ENCODE measurements at regions of chr9 and their contacts with region 1.

Region 1: DNA sequence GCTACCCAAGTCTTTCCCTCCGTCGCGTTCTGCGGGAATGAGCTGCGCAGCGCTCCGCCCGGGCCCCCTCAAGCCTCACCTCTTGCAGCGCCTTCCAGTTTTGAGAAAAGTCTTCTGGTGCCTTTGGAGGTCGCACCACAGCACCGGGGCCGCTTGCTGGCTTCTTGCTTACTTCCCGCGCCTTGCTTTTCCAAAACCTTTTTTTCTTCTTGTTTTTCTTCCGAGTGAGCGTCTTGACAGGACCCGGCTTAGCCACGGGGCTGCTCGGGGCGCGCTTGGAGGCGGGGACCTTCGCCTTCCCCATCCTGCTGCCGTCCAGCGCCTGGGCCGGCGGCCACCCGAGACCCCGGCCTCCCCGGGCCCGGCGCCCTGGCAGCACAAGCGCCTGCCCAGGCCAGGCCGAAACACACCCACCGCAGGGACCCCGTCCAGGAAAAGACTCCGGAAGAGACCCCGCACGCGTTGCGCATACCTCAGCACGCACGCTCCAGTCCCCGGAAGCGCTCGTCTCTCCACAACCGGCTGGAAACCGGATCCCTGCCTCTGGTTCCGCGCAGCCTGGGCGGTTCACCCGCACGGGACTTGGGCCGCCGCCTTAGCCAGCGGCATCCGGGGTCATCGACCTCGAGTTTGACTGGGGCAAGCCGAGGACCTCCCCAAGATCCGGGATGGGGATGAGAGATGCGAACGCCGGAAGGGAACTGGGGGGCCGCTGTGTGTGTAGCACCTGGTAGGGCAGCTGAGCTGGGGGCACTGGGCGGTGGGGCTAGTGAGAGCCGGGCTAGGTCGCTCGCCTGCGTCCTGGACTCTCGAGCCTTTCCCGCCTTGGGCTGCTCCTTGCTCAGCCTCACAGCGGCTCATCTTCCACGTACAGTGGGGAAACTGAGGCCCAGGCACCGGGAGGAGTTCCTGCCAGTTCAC is at the start of gene REXO4:
- DNase-seq: peak; percentile 92
- ATAC-seq: peak; percentile 87
- H3K4me3 Mint-ChIP-seq: peak within 1 kb of the TSS; percentile 92
- H3K27ac Mint-ChIP-seq: peak within 1 kb of the TSS; percentile 93
- H3K4me1 Mint-ChIP-seq: peaks cover 51% of the 10 kb centered on the region
- H3K27me3 Mint-ChIP-seq: no peaks in the 10 kb centered on the region
- total RNA-seq, gene REXO4: 25.9 to 34.3 TPM

Region 2: DNA sequence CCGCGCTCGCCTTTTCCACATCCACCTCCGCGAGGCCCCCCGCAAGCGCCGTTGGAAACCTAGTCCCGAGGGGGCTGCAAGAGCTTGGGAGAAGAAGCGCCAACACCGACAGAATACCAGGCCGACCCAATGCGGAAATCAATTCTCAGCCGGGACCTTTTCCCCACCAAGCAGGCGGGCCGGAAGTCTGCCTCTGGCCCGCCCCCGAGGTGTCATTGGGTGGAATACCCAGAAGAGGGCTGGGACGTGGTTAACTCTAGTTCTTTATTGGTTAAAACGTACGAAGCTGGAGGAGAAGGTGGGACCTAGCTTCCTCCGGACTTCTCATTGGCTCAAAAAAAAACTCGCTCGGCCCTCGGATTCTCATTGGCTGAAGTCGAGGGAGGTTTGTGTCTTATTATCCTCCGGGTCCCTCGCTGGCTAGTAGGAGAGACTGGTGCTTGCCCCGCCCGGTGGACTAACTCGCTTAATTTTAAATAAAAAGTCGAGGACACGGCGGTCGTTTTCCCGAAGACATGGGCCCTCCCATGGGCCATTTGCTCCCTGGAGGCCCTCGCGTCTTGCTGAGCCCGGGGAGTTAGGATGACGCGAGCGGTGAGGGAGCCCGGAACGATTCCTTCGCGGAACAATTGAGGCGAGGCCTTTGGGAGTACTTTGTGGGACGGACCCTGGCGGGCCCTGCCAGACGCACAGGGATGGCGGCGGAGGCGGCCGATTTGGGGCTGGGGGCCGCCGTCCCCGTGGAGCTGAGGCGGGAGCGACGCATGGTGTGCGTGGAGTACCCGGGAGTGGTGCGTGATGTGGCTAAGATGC is 387.3 kb before region 1 on chr9 and contains the start of gene GTF3C5:
- CTCF ChIA-PET with region 1: no interaction called
- POLR2A ChIA-PET with region 1: no interaction called
- intact Hi-C with region 1: loop called in 1 of 2 experiments (anchors 2 kb)
- DNase-seq: peak; percentile 95
- ATAC-seq: peak; percentile 98
- H3K4me3 Mint-ChIP-seq: peak within 1 kb of the TSS; percentile 94
- H3K27ac Mint-ChIP-seq: peak within 1 kb of the TSS; percentile 95
- H3K4me1 Mint-ChIP-seq: peaks cover 41% of the 10 kb centered on the region
- H3K27me3 Mint-ChIP-seq: no peaks in the 10 kb centered on the region
- total RNA-seq, gene GTF3C5: 81.3 to 84.5 TPM

Region 3: GRCh38 chr9:133347985-133348717 is 69.7 kb before region 1 on chr9 and contains the starts of genes MED22 and RPL7A:
- CTCF ChIA-PET with region 1: no interaction called
- POLR2A ChIA-PET with region 1: no interaction called
- intact Hi-C with region 1: loop called (anchors 1 to 5 kb)
- DNase-seq: peak; percentile 96
- ATAC-seq: peak; percentile 83
- H3K4me3 Mint-ChIP-seq: peak within 1 kb of the TSS; percentile 97
- H3K27ac Mint-ChIP-seq: peak within 1 kb of the TSS; percentile 97
- H3K4me1 Mint-ChIP-seq: peaks cover 36% of the 10 kb centered on the region
- H3K27me3 Mint-ChIP-seq: no peaks in the 10 kb centered on the region
- total RNA-seq, gene MED22: 22.9 to 26.4 TPM
- total RNA-seq, gene RPL7A: 3,179 to 3,246 TPM

Region 4: GRCh38 chr9:133406480-133407307 is 11.1 kb before region 1 on chr9:
- CTCF ChIA-PET with region 1: interaction called, 3 read pairs
- POLR2A ChIA-PET with region 1: no interaction called
- intact Hi-C with region 1: loop called (anchors 1 kb)
- DNase-seq: peak; percentile 93
- ATAC-seq: peak; percentile 94
- H3K4me3 Mint-ChIP-seq: no peak overlapping the region
- H3K27ac Mint-ChIP-seq: peak overlapping the region; percentile 48
- H3K4me1 Mint-ChIP-seq: peaks cover 6% of the 10 kb centered on the region
- H3K27me3 Mint-ChIP-seq: no peaks in the 10 kb centered on the region

Region 5: GRCh38 chr9:133478851-133479711 is 61.3 kb after region 1 on chr9 and contains the start of gene SLC2A6:
- CTCF ChIA-PET with region 1: interaction called, 3 read pairs
- POLR2A ChIA-PET with region 1: interaction called, 3 read pairs
- intact Hi-C with region 1: loop called in 1 of 2 experiments (anchors 1 kb)
- DNase-seq: peak; percentile 89
- ATAC-seq: peak; percentile 100
- H3K4me3 Mint-ChIP-seq: peak within 1 kb of the TSS; percentile 67
- H3K27ac Mint-ChIP-seq: no peak within 1 kb of the TSS
- H3K4me1 Mint-ChIP-seq: peaks cover 6% of the 10 kb centered on the region
- H3K27me3 Mint-ChIP-seq: no peaks in the 10 kb centered on the region
- total RNA-seq, gene SLC2A6: 1.6 to 1.9 TPM

Region 6: DNA sequence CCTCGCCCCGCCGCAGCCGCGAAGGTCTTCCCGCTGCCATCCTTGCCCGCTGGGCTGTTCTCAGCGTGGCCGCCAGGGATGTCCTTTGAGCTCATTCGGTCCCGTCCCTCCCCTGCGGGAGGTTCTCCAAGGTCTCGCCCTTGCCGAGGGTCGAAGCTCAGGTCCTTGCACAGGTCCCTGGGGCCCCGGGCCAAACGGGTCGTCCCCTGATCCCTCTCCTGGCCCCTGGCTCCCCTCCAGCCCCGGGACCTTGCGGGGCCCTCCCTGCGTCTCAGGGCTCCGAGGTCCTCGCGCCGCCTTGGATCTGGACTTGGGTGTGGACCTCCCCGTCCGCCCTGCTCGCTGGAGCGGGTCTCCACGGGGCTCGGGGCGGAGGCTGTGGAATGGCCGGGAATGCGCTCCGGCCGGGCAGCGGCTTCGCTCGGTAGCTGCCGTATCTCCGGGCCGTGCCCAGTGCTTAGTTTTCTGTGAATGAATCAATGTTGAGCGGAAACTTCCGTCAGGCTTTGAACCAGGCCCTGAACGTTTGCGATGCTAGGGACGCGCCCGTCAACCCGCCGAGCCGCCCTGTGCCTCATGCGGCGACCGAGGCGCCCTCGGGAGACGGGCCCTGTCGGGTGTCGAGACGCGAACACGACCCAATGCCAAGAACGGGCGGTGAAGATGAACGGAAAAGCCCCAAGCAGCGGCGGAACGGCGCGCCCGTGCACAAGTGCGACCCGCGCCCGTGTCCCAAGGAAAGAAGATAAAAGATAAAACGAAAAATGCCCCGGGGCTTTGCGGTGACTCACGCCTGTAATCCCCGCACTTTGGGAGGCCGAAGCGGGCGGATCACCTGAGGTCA is 745.8 kb after region 1 on chr9:
- CTCF ChIA-PET with region 1: no interaction called
- POLR2A ChIA-PET with region 1: no interaction called
- intact Hi-C with region 1: loop called in 1 of 2 experiments (anchors 1 kb)
- DNase-seq: peak; percentile 83
- ATAC-seq: peak; percentile 39
- H3K4me3 Mint-ChIP-seq: no peak overlapping the region
- H3K27ac Mint-ChIP-seq: no peak overlapping the region
- H3K4me1 Mint-ChIP-seq: peaks cover 2% of the 10 kb centered on the region
- H3K27me3 Mint-ChIP-seq: no peaks in the 10 kb centered on the region

Measured in activated CD4-positive, alpha-beta T cell treated with anti-CD3 and anti-CD28 coated beads for 36 hours (primary cell).